Breast epithelium (tissue), 4 donors: ENCODE measurements at regions of chr15 and their contacts with region 1.

Region 1: DNA sequence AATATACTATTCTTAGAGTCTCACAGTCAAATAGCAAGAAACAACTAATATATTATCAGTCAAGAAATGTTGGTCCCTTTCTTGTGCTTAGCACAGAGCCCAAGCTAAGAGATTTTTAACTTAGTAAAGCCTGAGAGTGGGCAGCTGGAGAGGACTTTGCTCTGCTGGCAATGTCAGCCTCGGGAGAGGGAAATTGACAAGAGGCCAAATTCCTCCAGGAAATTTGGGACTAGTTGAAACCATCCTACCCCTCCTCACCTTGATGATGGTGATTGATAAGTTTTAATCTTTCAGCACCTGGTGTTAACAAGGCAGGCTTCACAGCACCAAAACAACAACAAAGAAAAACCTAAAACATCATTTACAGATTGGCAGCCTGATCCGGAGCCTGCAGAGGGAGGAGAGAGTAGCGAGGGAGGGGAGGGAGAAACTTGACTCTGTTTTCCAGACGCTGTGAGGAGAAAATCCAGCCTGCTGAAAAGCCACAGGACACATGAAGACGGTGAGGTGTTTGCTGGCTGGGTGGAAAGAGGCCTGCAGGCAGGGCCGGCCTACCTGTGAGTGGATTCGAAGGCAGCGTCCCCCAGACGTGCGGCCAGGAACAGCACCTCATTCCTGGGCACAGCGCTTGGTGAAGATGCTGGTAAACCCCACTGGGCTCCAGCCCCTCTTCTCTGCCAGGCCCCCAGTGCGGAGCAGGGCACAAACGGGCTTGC is 150.9 kb downstream of the LRRC28 start:
- DNase-seq: no peak
- H3K4me3 ChIP-seq: no peak overlapping the region
- H3K27ac ChIP-seq: peak overlapping the region in 1 of 2 donors; percentile 29
- H3K4me1 ChIP-seq: no peaks in the 10 kb centered on the region
- H3K27me3 ChIP-seq: no peaks in the 10 kb centered on the region
- CTCF ChIP-seq: no peak
- POLR2A ChIP-seq: no peak

Region 2: DNA sequence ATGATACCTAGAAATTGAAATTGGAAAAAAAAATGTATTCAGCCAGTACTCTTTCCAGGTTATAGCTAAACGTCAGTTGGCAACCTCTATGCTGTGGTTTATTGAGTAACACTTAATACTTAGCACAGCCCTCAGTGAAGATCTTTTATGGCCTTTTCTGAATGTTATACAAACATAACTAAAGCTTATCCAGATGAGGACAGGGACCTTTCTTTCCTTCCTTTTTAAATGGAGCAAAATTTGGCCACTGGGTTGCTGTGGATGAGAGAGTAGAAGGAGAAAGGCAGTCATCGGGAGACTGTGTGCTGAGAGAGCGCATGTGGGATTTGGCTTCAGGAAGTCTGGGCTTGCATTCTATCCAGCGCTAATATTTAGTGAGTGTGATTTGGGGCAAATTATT is 717.7 kb before region 1 on chr15:
- intact Hi-C with region 1: no loop called
- DNase-seq: no peak
- H3K4me3 ChIP-seq: no peak overlapping the region
- H3K27ac ChIP-seq: peak overlapping the region; percentile 41 to 59
- H3K4me1 ChIP-seq: peaks cover 7 to 15% of the 10 kb centered on the region in 2 donors
- H3K27me3 ChIP-seq: no peaks in the 10 kb centered on the region
- CTCF ChIP-seq: no peak
- POLR2A ChIP-seq: no peak

Region 3: GRCh38 chr15:98713585-98714001 is 688.6 kb before region 1 on chr15:
- intact Hi-C with region 1: loop called (anchors 5 kb)
- DNase-seq: peak in 1 of 2 donors; percentile 55
- H3K4me3 ChIP-seq: no peak overlapping the region
- H3K27ac ChIP-seq: peak overlapping the region; percentile 82 to 89
- H3K4me1 ChIP-seq: peaks cover 5 to 34% of the 10 kb centered on the region in 2 donors
- H3K27me3 ChIP-seq: no peaks in the 10 kb centered on the region
- CTCF ChIP-seq: no peak
- POLR2A ChIP-seq: no peak

Region 4: DNA sequence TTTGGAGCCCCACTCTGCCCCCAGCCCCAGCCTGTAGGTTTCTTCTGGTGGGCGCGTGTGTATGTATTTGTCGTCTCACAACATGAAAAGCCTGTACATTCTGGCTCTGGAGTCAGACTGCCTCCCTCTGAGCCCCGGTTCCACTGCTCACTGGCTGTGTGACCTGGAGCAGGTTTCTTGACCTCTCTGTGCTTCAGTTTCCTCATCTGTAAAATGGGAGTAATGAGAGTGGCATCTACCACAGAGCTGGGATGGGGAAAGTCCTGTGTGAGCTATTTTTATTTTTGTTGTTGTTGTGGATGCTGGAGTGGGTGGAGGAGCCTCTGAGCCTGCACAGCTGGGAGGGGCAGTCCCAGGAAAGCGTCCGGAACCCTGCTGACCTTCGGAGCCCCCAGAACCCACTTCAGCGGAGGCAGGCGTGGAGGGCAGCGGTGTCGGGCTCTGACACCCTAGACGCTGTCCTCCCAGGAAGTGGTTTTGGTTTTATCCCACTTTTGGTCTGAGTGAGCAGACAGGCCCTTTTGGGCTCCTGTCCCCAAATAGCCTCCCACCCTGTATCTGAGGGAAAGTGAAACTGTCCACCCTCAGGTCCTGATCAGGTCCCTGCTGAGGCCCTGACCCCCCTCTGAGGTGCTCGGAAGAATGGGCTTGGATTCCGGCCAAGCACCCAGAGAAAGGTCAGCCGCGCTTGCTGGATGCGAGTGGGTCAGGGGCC is 1746.2 kb after region 1 on chr15:
- intact Hi-C with region 1: loop called (anchors 5 kb)
- DNase-seq: peak in 1 of 2 donors; percentile 39
- H3K4me3 ChIP-seq: no peak overlapping the region
- H3K27ac ChIP-seq: no peak overlapping the region
- H3K4me1 ChIP-seq: no peaks in the 10 kb centered on the region
- H3K27me3 ChIP-seq: no peaks in the 10 kb centered on the region
- CTCF ChIP-seq: no peak
- POLR2A ChIP-seq: no peak